PC-9 (cell line): ENCODE measurements at regions of chr9 and their contacts with region 1.

Region 1: DNA sequence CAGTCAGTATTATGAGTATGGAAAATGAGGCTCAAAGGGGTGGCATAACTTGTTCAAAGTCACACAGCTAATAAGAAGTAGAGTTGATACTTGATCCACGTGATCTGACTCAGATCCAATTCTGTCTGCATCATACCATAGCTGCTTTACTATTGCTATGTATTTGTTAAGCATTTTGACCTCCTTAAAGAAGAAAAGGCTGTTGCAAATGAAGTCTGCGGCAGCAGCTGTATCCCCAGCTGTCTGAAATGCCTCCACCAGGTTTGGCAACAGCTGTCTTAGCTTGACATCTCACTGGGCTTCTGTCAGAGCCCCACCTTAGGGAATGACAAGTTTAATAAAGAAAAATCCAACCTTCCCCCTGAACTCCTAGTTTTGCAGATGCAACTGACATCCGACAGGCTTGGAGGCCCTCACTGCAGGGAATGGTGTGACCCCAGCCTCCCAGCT is 75.6 kb upstream of the SLC44A1 start:
- DNase-seq: no peak
- H3K4me3 ChIP-seq: no peak overlapping the region
- H3K27ac ChIP-seq: no peak overlapping the region
- H3K4me1 ChIP-seq: no peaks in the 10 kb centered on the region
- H3K27me3 ChIP-seq: no peaks in the 10 kb centered on the region
- CTCF ChIP-seq: no peak

Region 2: DNA sequence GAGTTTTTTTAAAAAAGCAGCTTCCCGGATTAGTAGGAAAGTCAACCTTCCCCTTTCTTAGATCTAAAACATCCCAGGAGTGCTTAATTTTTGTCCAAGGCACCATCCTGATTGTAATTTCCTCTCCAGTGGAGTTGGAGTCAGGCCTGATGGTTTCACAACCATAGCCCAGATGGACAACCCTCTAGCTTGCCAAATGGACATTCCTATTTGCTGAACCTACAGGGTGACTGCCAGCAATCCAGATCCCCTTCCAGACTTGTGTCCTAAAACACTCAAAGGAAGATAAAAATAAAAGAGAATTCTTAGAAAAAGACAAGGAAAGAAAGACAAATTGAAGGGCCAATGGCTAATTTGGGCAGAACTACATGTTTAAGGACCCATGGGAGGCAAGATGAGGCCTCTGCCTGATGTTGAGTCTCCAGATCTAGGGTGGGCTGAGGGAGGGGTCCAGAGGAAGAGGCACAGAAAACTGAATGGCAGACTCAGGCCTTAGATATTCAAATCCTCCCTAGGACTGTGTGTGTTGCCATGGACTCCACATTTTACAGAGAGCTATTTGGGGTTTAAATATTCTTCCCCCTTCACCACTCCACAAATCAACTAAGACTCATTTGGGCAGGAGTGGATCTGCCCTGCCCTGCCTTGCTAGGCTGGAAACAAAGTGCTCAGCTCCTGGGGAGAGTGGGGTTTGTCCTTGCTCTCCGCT is 37.0 kb after region 1 on chr9:
- CTCF ChIA-PET with region 1: interaction called, 13 read pairs
- POLR2A ChIA-PET with region 1: no interaction called
- intact Hi-C with region 1: no loop called
- DNase-seq: peak in 1 of 2 experiments; percentile 52
- H3K4me3 ChIP-seq: no peak overlapping the region
- H3K27ac ChIP-seq: no peak overlapping the region
- H3K4me1 ChIP-seq: peaks cover 19% of the 10 kb centered on the region
- H3K27me3 ChIP-seq: no peaks in the 10 kb centered on the region
- CTCF ChIP-seq: no peak

Region 3: DNA sequence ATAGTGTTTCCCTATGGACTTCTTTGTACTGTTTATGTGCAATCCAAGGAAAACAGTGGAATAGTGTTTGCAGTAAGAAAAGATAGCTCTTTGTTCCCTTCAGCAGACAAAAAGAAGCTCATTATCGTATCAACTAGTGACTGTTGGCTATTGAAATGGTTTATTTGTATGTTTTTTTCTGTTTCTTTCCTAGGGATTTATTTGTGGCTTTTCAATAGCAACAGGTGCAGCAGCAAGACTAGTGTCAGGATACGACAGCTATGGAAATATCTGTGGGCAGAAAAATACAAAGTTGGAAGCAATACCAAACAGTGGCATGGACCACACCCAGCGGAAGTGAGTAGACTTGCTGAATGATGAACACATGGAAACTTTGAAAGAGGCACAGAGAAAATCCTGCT is 140.6 kb after region 1 on chr9:
- CTCF ChIA-PET with region 1: no interaction called
- POLR2A ChIA-PET with region 1: no interaction called
- intact Hi-C with region 1: loop called (anchors 10 kb)
- DNase-seq: no peak
- H3K4me3 ChIP-seq: no peak overlapping the region
- H3K27ac ChIP-seq: no peak overlapping the region
- H3K4me1 ChIP-seq: no peaks in the 10 kb centered on the region
- H3K27me3 ChIP-seq: no peaks in the 10 kb centered on the region
- CTCF ChIP-seq: no peak